ENCODE measurements at regions of chr9 and their contacts with region 1.

Region 1: DNA sequence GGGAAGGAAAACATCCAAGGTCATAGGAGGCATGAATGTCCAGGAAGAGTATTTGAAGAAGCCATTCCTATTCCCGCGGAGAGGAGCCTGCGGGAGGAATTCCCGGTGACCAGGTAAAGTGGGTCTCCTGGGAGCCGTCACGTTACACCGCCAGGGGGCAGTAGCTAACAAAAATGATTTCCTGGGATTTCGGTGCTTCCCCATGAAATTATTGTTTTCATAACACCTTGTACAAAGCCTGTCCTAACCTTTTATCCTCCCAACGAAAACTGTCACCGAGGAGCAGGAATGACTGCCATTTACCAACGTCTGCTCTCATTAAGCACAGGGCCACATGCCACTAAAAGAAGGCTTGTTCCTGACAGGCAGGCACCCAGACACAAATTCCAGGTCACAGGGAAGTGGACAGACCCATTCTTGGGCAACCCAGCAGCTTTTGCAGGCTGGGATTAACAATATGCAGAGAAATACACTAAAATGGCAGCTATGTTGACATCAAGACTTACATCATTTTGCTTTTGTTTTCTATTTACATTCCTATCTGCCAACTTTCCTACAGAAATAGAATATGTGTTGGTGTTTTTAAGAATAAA is 41.2 kb upstream of the CTSL start:
- DNase-seq: no peak
- H3K4me3 ChIP-seq: no peak overlapping the region
- CTCF ChIP-seq: peak; percentile 64

Region 2: DNA sequence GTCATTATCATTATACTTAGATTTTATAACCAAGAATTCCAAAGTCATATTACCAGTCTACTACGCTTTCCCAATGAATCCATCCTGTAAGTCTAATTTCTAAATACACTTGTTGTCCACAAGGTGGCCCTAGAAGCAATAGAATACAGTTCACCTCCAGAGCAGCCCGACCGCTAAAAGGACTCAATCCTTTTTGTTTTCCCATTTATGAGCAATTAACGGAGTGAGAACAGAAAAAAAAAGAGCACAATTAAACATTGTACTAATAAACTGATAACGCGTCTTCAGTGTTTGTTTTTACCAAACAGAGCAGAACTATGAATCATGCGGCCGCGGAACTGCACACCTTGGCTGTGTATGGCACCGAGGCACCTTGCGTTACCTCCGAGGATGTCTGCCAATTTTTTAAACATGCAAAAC is 347.8 kb before region 1 on chr9:
- CTCF ChIA-PET with region 1: interaction called, 12 read pairs
- POLR2A ChIA-PET with region 1: no interaction called
- DNase-seq: peak; percentile 51
- H3K4me3 ChIP-seq: peak overlapping the region; percentile 51
- CTCF ChIP-seq: peak; percentile 46

Region 3: GRCh38 chr9:87701931-87702421 is 17.3 kb after region 1 on chr9:
- CTCF ChIA-PET with region 1: interaction called, 32 read pairs
- POLR2A ChIA-PET with region 1: no interaction called
- DNase-seq: no peak
- H3K4me3 ChIP-seq: no peak overlapping the region
- CTCF ChIP-seq: no peak

Region 4: GRCh38 chr9:87812375-87813118 is 127.8 kb after region 1 on chr9:
- CTCF ChIA-PET with region 1: interaction called, 173 read pairs
- POLR2A ChIA-PET with region 1: no interaction called
- DNase-seq: peak; percentile 28
- H3K4me3 ChIP-seq: no peak overlapping the region
- CTCF ChIP-seq: peak; percentile 84

Region 5: GRCh38 chr9:87894998-87895625 is 210.4 kb after region 1 on chr9:
- CTCF ChIA-PET with region 1: no interaction called
- POLR2A ChIA-PET with region 1: no interaction called
- DNase-seq: no peak
- H3K4me3 ChIP-seq: no peak overlapping the region
- CTCF ChIP-seq: no peak

Region 6: DNA sequence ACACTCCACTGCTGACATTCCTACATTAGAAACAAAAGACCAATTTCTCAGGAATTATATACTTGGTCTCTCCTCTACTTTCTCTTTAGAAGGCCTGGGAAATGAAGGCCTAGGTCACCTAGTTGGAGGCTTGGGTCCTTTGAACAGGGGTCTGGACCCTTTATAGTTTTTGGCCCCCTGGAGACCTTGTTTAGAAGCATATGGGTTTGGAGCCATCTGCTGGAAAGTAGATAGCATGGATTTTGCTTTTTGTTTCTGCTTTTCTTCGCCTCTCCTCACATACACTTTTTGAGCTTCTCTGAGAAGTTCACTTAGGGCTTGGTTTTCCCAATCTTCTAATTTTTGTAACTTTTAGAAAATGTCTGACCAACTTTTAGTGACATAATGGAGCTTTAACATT is 356.7 kb after region 1 on chr9:
- CTCF ChIA-PET with region 1: interaction called, 42 read pairs
- POLR2A ChIA-PET with region 1: no interaction called
- DNase-seq: no peak
- H3K4me3 ChIP-seq: no peak overlapping the region
- CTCF ChIP-seq: peak; percentile 15

Region 7: GRCh38 chr9:88773627-88774244 is 1089.0 kb after region 1 on chr9:
- CTCF ChIA-PET with region 1: no interaction called
- POLR2A ChIA-PET with region 1: no interaction called
- DNase-seq: no peak
- H3K4me3 ChIP-seq: no peak overlapping the region
- CTCF ChIP-seq: peak; percentile 19

Measured in AG04449 (cell line).